ENCODE measurements at regions of chr2 and their contacts with region 1.

Region 1: DNA sequence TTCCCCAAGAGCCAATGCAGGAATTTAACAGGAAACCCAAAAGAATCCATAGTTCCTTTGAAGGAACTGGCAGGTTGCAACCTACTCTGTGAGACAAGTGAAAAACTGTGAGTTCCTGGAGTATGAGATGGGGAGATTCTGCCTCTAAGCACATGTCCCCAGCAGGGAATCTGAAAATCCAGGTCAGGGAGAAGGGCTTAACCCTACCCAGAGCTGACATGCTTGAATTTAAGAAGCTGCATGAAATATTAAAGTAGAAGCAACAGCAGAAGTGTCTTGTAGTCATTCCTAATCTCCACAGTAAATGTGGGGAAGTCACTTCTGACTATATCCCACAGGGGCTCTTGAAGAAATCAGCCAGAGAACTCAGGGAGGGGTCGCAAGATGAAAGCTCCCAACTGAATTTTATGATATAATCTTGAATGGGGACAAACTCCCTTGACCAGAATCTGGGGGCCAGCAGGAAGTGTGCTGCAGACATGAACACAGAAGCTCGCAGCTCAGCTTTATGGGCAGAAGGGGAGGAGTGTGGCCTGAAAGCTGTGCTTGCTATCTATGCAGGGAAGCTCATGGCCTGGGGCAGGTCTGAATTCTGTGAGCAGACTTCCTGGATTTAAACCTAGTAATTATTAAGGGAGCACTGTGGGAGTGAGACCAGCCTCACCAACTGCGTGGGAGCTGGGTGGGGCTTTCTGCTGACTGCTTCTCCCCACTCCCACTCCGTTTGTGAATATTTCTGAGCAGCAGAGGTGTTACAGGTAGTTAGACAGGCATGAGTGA is 184.1 kb upstream of the KYNU start:
- DNase-seq: no peak
- ATAC-seq: no peak
- H3K4me3 ChIP-seq: no peak overlapping the region
- H3K27ac ChIP-seq: no peak overlapping the region
- H3K4me1 ChIP-seq: no peaks in the 10 kb centered on the region
- H3K27me3 ChIP-seq: no peaks in the 10 kb centered on the region
- CTCF ChIP-seq: no peak
- POLR2A ChIP-seq: no peak

Region 2: DNA sequence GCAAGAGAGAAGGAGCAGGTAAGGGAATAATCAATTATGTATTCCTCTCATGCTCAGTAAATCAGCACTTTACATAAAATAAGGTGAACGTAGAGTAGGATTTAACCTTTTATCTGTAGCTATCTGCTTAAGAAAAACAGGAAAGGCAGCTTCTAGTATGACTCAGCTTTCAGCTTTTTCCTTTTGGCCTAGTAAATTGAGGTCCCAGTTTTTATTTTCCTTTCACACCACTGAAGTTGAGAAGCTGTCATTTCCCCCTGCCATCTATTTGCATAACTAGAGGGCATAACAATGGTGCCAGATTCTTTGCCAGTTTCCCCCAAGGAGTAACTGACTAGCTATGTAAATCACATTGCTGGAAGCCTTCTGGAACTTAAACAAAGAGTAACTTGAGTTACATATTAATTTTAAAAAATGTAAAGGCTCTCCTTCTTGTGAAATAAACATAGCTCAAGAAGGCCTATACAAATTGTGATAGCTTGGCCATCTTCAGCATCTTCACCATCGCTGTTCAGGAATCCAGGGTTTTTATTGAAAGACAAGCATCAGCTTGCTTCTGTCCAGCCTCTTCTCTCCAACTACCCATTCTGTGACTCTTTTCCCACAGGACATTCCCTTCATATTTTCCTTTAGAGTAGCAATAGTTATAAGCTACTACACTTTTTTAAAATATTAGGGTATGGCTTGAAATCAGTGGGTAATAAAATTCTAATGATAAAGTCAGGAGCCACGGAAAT is 281.1 kb after region 1 on chr2:
- intact Hi-C with region 1: loop called in 1 of 2 experiments (anchors 10 kb)
- DNase-seq: no peak
- ATAC-seq: peak in 1 of 4 donors; percentile 20
- H3K4me3 ChIP-seq: no peak overlapping the region
- H3K27ac ChIP-seq: no peak overlapping the region
- H3K4me1 ChIP-seq: no peaks in the 10 kb centered on the region
- H3K27me3 ChIP-seq: no peaks in the 10 kb centered on the region
- CTCF ChIP-seq: no peak
- POLR2A ChIP-seq: no peak

Measured in right lobe of liver (tissue), 6 donors.